MCF 10A (cell line): ENCODE measurements at regions of chr20 and their contacts with region 1.

Region 1: GRCh38 chr20:59912609-59913008 is 20.8 kb downstream of the SYCP2 start:
- DNase-seq: no peak
- H3K4me3 Mint-ChIP-seq: no peak overlapping the region
- H3K27ac Mint-ChIP-seq: no peak overlapping the region
- H3K4me1 Mint-ChIP-seq: no peaks in the 10 kb centered on the region
- H3K27me3 Mint-ChIP-seq: peaks cover 10% of the 10 kb centered on the region
- CTCF ChIP-seq: no peak

Region 2: GRCh38 chr20:59933849-59934596 is 21.4 kb after region 1 on chr20:
- CTCF ChIA-PET with region 1: interaction called, 10 read pairs
- POLR2A ChIA-PET with region 1: interaction called, 11 read pairs
- intact Hi-C with region 1: no loop called
- DNase-seq: peak; percentile 69
- H3K4me3 Mint-ChIP-seq: peak overlapping the region; percentile 70
- H3K27ac Mint-ChIP-seq: no peak overlapping the region
- H3K4me1 Mint-ChIP-seq: peaks cover 16% of the 10 kb centered on the region
- H3K27me3 Mint-ChIP-seq: peaks cover 4% of the 10 kb centered on the region
- CTCF ChIP-seq: peak; percentile 97

Region 3: GRCh38 chr20:59985864-59986263 is 73.3 kb after region 1 on chr20:
- CTCF ChIA-PET with region 1: no interaction called
- POLR2A ChIA-PET with region 1: no interaction called
- intact Hi-C with region 1: no loop called
- DNase-seq: no peak
- H3K4me3 Mint-ChIP-seq: no peak overlapping the region
- H3K27ac Mint-ChIP-seq: no peak overlapping the region
- H3K4me1 Mint-ChIP-seq: peaks cover 13% of the 10 kb centered on the region
- H3K27me3 Mint-ChIP-seq: no peaks in the 10 kb centered on the region
- CTCF ChIP-seq: no peak

Region 4: DNA sequence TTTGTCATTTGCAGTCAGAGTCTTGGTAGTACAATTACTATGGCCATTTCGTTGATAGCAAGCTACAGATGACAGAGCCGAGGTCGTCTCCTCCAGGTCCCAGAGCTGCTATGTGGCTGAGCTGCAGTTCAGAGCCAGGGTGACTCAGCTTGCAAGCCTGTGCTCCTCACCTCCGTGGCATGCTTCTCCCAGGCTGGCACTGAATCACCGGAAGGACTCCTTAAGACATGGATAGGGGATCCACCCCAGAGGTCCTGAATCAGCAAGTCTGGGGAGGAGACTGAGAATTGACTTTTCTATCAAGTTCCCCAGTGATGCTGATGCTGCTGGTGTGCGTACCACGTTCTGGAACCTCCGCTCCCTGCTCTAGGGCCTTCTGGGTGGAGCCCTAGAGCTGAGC is 336.8 kb after region 1 on chr20:
- CTCF ChIA-PET with region 1: no interaction called
- POLR2A ChIA-PET with region 1: no interaction called
- intact Hi-C with region 1: no loop called
- DNase-seq: peak; percentile 94
- H3K4me3 Mint-ChIP-seq: no peak overlapping the region
- H3K27ac Mint-ChIP-seq: peak overlapping the region; percentile 35
- H3K4me1 Mint-ChIP-seq: peaks cover 18% of the 10 kb centered on the region
- H3K27me3 Mint-ChIP-seq: peaks cover 5% of the 10 kb centered on the region
- CTCF ChIP-seq: no peak